Esophagus muscularis mucosa (tissue), 4 donors: ENCODE measurements at regions of chr6 and their contacts with region 1.

Region 1: GRCh38 chr6:108592371-108593337 is 31.9 kb downstream of the FOXO3 start:
- DNase-seq: no peak
- H3K4me3 ChIP-seq: peak overlapping the region in 3 of 4 donors; percentile 3 to 13 (median 12)
- H3K27ac ChIP-seq: peak overlapping the region; percentile 84 to 89 (median 86)
- H3K4me1 ChIP-seq: peaks cover 96 to 100% (median 99%) of the 10 kb centered on the region in 4 donors
- H3K27me3 ChIP-seq: no peaks in the 10 kb centered on the region
- CTCF ChIP-seq: no peak
- EP300 ChIP-seq: no peak
- POLR2A ChIP-seq: no peak

Region 2: GRCh38 chr6:108565893-108566292 is 26.8 kb before region 1 on chr6:
- intact Hi-C with region 1: loop called (anchors 2 kb)
- DNase-seq: no peak
- H3K4me3 ChIP-seq: peak overlapping the region; percentile 6 to 95 (median 90)
- H3K27ac ChIP-seq: peak overlapping the region; percentile 98 to 100 (median 99)
- H3K4me1 ChIP-seq: peaks cover 55 to 81% (median 76%) of the 10 kb centered on the region in 4 donors
- H3K27me3 ChIP-seq: no peaks in the 10 kb centered on the region
- CTCF ChIP-seq: peak; percentile 12 to 33 (median 25)
- EP300 ChIP-seq: no peak
- POLR2A ChIP-seq: no peak

Region 3: DNA sequence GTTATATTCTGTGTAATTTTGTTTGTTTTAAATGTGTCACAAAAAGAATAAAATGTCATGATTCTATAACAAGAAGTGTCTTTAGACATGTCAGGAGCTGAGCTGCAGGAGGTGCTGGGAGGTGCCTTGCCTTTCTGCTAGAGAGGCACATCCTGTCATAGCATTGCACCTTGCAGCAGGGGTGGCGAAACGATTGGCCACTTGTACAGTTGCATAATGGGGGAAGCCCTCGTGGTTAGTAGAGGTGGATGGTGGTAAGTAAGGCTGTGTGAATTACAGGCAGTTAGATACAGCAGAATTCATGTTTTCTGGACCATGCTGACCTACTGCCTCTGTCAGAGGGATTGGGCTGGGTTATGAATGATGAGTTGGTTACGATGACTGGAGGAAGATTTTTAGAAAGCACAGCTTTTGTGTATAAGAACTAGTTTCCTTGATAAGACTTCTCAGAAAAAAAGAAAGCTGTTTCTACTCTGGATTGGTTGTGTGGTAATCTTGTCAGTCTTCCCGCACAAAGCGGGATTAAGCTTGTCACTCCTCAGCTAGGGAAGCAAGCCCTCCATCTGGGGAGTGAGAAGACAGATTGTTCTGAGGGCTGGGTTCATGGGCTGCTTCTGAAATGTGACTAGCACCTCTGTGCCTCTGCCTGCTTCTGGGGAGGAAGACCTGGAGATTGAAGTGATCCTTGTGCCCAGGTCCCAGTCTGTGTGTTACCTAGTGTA is 43.0 kb after region 1 on chr6:
- intact Hi-C with region 1: no loop called
- DNase-seq: peak; percentile 88
- H3K4me3 ChIP-seq: no peak overlapping the region
- H3K27ac ChIP-seq: no peak overlapping the region
- H3K4me1 ChIP-seq: peaks cover 61 to 90% (median 70%) of the 10 kb centered on the region in 4 donors
- H3K27me3 ChIP-seq: no peaks in the 10 kb centered on the region
- CTCF ChIP-seq: no peak
- EP300 ChIP-seq: no peak
- POLR2A ChIP-seq: no peak